Activated CD4-positive, alpha-beta memory T cell treated with anti-CD3 and anti-CD28 coated beads, Interleukin-2, amount 10 ng/mL, durations not matched to agents 7 days and 5 days (primary cell): ENCODE measurements at regions of chr10 and their contacts with region 1.

Region 1: GRCh38 chr10:103470761-103471653 is 8.0 kb downstream of the CALHM3 start:
- DNase-seq: peak; percentile 92
- H3K4me3 Mint-ChIP-seq: peak overlapping the region; percentile 66
- H3K27ac Mint-ChIP-seq: peak overlapping the region; percentile 99
- H3K4me1 Mint-ChIP-seq: peaks cover 76% of the 10 kb centered on the region
- H3K27me3 Mint-ChIP-seq: no peaks in the 10 kb centered on the region

Region 2: DNA sequence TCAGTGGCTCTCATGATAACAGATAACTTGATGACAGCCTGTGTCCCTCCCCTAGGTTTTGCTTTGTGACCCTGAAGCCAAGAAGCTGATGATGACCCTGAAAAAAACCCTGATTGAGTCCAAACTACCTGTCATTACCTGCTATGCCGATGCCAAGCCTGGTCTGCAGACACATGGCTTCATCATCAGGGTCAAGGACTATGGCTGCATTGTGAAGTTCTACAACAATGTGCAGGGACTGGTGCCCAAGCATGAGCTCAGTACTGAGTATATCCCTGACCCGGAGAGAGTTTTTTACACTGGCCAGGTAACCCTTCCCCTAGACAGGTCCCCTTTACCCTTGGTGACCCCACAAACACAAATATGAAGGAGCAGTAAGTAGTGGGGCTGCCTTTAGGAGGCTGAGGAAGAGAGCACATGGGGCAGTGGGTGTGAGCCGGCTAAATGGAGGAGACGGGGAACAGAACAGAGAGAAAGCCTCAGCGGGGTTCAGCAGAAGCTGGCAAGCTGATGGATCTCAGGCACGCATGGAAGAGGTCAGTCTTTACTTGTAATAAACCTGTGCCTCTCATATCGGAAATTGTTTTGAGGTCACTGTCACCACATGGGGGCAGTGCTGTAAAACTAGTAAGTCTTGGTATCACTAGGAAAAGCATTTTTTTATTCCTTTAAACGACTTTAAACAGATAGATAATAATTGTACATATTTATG is 54.4 kb before region 1 on chr10:
- CTCF ChIA-PET with region 1: interaction called, 22 read pairs
- POLR2A ChIA-PET with region 1: no interaction called
- DNase-seq: peak; percentile 77
- H3K4me3 Mint-ChIP-seq: no peak overlapping the region
- H3K27ac Mint-ChIP-seq: no peak overlapping the region
- H3K4me1 Mint-ChIP-seq: peaks cover 1% of the 10 kb centered on the region
- H3K27me3 Mint-ChIP-seq: no peaks in the 10 kb centered on the region

Region 3: DNA sequence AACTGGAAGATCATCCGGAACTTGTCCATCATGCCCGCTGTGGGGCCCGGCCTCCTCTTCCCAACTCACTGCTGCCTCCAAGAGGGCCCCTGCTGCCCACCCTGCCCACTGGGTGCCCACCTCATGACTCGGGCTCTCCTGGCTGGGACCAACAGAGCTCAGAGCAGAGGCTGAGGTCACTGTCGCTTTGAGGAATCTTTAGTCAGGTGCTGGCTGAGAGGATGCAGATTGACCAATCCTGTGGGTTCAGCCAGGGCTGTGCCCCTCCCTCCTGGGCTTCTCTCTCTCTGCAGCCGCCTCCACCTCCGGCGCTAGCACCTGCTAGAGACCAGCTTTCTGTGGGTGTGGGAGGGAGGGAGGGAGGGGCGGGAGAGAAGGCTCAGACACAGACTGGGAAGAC is 12.3 kb before region 1 on chr10 and contains the start of gene CALHM1:
- CTCF ChIA-PET with region 1: interaction called, 4 read pairs
- POLR2A ChIA-PET with region 1: interaction called, 87 read pairs
- DNase-seq: peak; percentile 42
- H3K4me3 Mint-ChIP-seq: peak within 1 kb of the TSS; percentile 21
- H3K27ac Mint-ChIP-seq: peak within 1 kb of the TSS; percentile 71
- H3K4me1 Mint-ChIP-seq: peaks cover 36% of the 10 kb centered on the region
- H3K27me3 Mint-ChIP-seq: peaks cover 9% of the 10 kb centered on the region
- total RNA-seq, gene CALHM1: 0.58 to 0.73 TPM

Region 4: DNA sequence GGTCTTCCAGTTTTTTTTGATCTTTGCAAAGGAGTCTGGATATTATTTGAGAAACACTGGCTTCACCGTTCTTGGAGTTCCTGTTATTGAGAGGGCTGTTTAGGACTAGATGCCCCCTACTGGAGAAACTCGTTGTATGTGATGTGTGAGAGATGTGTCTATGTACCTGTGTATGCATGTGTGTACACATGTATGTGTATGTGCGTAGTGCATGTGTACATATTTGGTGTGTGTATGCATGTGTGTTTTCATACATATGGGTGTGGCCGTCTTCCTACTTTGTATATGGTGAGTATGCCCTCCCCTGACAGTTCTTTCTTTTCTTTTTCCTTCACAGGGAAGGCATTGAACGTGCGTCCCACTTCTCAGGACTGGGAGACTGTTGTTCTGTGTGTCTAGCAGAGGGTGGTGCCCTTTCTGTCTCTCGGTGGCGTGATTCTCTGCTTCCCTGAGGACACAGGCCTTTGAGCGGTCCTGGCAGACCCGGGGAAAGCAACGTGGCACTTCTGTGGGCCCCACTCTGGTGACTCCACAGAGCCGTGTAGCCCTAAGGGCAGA is 11.0 kb after region 1 on chr10:
- CTCF ChIA-PET with region 1: interaction called, 10 read pairs
- POLR2A ChIA-PET with region 1: interaction called, 4 read pairs
- DNase-seq: peak; percentile 38
- H3K4me3 Mint-ChIP-seq: no peak overlapping the region
- H3K27ac Mint-ChIP-seq: no peak overlapping the region
- H3K4me1 Mint-ChIP-seq: peaks cover 36% of the 10 kb centered on the region
- H3K27me3 Mint-ChIP-seq: peaks cover 3% of the 10 kb centered on the region

Region 5: DNA sequence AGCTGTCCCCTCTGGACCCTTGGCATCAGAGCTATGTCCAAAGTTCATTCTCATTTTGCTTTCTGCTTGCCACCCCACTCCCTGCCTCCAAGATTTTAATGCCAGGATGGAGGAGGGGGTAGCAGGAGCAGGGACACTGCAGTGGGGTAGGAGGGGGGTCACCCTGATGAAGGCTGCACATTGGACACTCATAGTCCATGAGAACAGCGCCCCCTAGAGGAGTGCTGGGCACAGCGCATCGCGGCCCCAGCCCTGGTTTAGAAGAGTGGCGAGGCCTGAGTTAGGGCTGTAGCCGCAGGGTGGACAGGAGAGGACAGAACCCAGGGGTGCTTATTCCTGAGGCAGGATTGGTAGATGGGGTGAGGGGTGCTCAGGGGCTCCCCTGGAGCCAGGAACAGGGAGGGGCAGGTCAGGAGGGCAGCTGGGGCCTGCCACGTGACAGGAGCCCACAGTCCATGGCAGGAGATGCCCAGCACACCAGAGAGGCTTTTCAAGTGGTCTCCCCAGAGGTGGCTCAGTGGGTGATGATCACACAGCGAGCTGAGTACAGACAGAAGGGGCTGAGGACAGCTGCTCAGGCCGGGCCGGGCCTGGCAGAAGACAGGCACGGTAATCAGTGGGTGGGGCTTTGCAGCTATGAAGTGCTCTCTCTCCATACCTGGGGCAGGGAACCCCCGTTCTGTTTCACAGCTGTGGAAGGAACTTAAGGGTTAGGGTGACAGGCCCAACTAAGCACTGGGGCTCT is 93.9 kb after region 1 on chr10:
- CTCF ChIA-PET with region 1: no interaction called
- POLR2A ChIA-PET with region 1: no interaction called
- DNase-seq: peak; percentile 49
- H3K4me3 Mint-ChIP-seq: no peak overlapping the region
- H3K27ac Mint-ChIP-seq: no peak overlapping the region
- H3K4me1 Mint-ChIP-seq: no peaks in the 10 kb centered on the region
- H3K27me3 Mint-ChIP-seq: peaks cover 6% of the 10 kb centered on the region

Region 6: GRCh38 chr10:103576862-103577261 is 105.9 kb after region 1 on chr10:
- CTCF ChIA-PET with region 1: no interaction called
- POLR2A ChIA-PET with region 1: no interaction called
- DNase-seq: no peak
- H3K4me3 Mint-ChIP-seq: no peak overlapping the region
- H3K27ac Mint-ChIP-seq: no peak overlapping the region
- H3K4me1 Mint-ChIP-seq: no peaks in the 10 kb centered on the region
- H3K27me3 Mint-ChIP-seq: peaks cover 3% of the 10 kb centered on the region